ENCODE measurements at regions of chr11 and their contacts with region 1.

Region 1: DNA sequence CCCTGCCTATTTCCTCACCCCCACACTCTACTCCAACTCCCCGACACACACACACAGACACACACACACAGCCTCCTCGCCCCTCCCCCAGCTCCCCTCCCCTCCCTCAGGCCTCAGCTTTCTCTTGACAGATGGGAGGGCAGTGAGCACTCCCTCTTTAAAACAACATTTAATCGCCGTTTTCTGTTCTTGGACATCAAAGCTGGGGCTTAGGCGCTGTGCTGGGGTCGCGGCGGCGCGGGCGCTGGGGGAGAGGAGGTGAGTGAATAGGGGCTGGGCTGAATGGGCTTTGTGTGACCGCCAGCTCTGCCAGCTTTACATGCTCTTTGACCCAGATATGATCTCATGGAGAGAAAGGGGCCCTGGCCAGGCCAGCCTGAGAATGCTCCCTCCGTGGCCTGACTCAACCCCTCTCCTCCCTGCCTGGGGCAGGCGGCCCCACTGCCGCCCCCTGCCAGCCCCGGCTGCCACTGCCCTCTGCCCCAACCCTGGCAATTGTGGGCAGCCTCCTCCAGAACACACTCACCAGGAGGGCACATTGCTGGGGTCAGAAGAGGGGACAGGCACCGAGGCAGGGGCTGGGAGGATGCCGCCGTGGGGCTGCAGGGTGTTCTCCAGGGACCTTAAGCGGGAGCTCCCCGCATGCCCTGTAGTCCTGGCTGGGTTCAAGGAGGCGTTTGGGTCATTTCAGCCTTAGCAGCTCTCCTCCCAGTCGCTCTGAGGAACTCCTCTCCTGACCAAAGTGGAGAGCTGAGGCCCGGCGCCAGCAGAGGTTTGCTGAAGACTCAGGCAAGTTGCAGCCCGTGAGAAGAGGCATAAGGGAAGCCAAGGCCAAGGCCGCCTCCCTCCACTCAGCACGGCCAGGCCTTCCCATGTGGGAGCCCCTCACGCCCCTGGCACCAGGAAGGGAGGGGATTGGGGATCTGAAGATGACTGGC is 38.3 kb upstream of the NNMT start:
- DNase-seq: no peak
- H3K4me3 Mint-ChIP-seq: no peak overlapping the region
- H3K27ac Mint-ChIP-seq: peak overlapping the region; percentile 89
- H3K4me1 Mint-ChIP-seq: peaks cover 34% of the 10 kb centered on the region
- H3K27me3 Mint-ChIP-seq: no peaks in the 10 kb centered on the region
- CTCF ChIP-seq: no peak

Region 2: GRCh38 chr11:114197799-114198500 is 59.9 kb before region 1 on chr11:
- CTCF ChIA-PET with region 1: interaction called, 5 read pairs
- POLR2A ChIA-PET with region 1: interaction called, 13 read pairs
- intact Hi-C with region 1: loop called (anchors 5 kb)
- DNase-seq: peak; percentile 95
- H3K4me3 Mint-ChIP-seq: peak overlapping the region; percentile 1
- H3K27ac Mint-ChIP-seq: peak overlapping the region; percentile 97
- H3K4me1 Mint-ChIP-seq: peaks cover 66% of the 10 kb centered on the region
- H3K27me3 Mint-ChIP-seq: no peaks in the 10 kb centered on the region
- CTCF ChIP-seq: no peak

Region 3: GRCh38 chr11:114243461-114244372 is 14.2 kb before region 1 on chr11:
- CTCF ChIA-PET with region 1: interaction called, 21 read pairs
- POLR2A ChIA-PET with region 1: interaction called, 10 read pairs
- intact Hi-C with region 1: no loop called
- DNase-seq: no peak
- H3K4me3 Mint-ChIP-seq: no peak overlapping the region
- H3K27ac Mint-ChIP-seq: peak overlapping the region; percentile 51
- H3K4me1 Mint-ChIP-seq: peaks cover 27% of the 10 kb centered on the region
- H3K27me3 Mint-ChIP-seq: no peaks in the 10 kb centered on the region
- CTCF ChIP-seq: no peak